Naive thymus-derived CD4-positive, alpha-beta T cell (primary cell): ENCODE measurements at regions of chr5 and their contacts with region 1.

Region 1: GRCh38 chr5:115841382-115842088 is at the starts of genes AP3S1 and ATG12:
- DNase-seq: peak; percentile 89 to 96 (median 94)
- ATAC-seq: peak; percentile 92
- H3K4me3 ChIP-seq: peak within 1 kb of the TSS; percentile 81
- H3K4me3 Mint-ChIP-seq: peak within 1 kb of the TSS; percentile 97 to 100 (median 99)
- H3K27ac ChIP-seq: peak within 1 kb of the TSS; percentile 83
- H3K27ac Mint-ChIP-seq: peak within 1 kb of the TSS; percentile 97 to 100 (median 99)
- H3K4me1 ChIP-seq: peaks cover 36 to 37% of the 10 kb centered on the region in 2 donors
- H3K4me1 Mint-ChIP-seq: peaks cover 34 to 83% (median 61%) of the 10 kb centered on the region in 7 donors
- H3K27me3 ChIP-seq: no peaks in the 10 kb centered on the region
- H3K27me3 Mint-ChIP-seq: peaks cover 0 to 7% (median 0%) of the 10 kb centered on the region in 5 donors
- total RNA-seq, gene AP3S1: 22.2 to 55.2 (median 43.3) TPM
- total RNA-seq, gene ATG12: 47.9 to 84.9 (median 60.0) TPM

Region 2: GRCh38 chr5:115169487-115170133 is 671.9 kb before region 1 on chr5 and contains the start of gene TRIM36:
- CTCF ChIA-PET with region 1: no interaction called
- POLR2A ChIA-PET with region 1: no interaction called
- intact Hi-C with region 1: loop called (anchors 1 to 5 kb)
- DNase-seq: peak; percentile 70 to 97 (median 81)
- ATAC-seq: peak; percentile 98
- H3K4me3 ChIP-seq: peak within 1 kb of the TSS; percentile 70
- H3K4me3 Mint-ChIP-seq: peak within 1 kb of the TSS; percentile 71 to 89 (median 84)
- H3K27ac ChIP-seq: no peak within 1 kb of the TSS
- H3K27ac Mint-ChIP-seq: peak within 1 kb of the TSS in 2 of 9 donors; percentile 53 to 81
- H3K4me1 ChIP-seq: peaks cover 9 to 11% of the 10 kb centered on the region in 2 donors
- H3K4me1 Mint-ChIP-seq: peaks cover 6 to 17% (median 12%) of the 10 kb centered on the region in 7 donors
- H3K27me3 ChIP-seq: peaks cover 17 to 38% of the 10 kb centered on the region in 2 donors
- H3K27me3 Mint-ChIP-seq: peaks cover 61 to 77% (median 68%) of the 10 kb centered on the region in 5 donors
- total RNA-seq, gene TRIM36: 0.12 to 2.6 (median 0.32) TPM in 4 of 5 experiments, not detected in the other

Region 3: GRCh38 chr5:115296124-115297022 is 545.2 kb before region 1 on chr5 and contains the start of gene CCDC112:
- CTCF ChIA-PET with region 1: no interaction called
- POLR2A ChIA-PET with region 1: interaction called, 5 read pairs
- intact Hi-C with region 1: loop called (anchors 1 kb)
- DNase-seq: peak; percentile 49 to 71 (median 67)
- ATAC-seq: peak; percentile 83
- H3K4me3 ChIP-seq: peak within 1 kb of the TSS; percentile 56
- H3K4me3 Mint-ChIP-seq: peak within 1 kb of the TSS; percentile 77 to 92 (median 89)
- H3K27ac ChIP-seq: peak within 1 kb of the TSS; percentile 47
- H3K27ac Mint-ChIP-seq: peak within 1 kb of the TSS in 8 of 9 donors; percentile 29 to 80 (median 69)
- H3K4me1 ChIP-seq: peaks cover 8 to 10% of the 10 kb centered on the region in 2 donors
- H3K4me1 Mint-ChIP-seq: peaks cover 5 to 18% (median 13%) of the 10 kb centered on the region in 7 donors
- H3K27me3 ChIP-seq: no peaks in the 10 kb centered on the region
- H3K27me3 Mint-ChIP-seq: peaks cover 0 to 69% (median 3%) of the 10 kb centered on the region in 5 donors
- total RNA-seq, gene CCDC112: 0.51 to 8.5 (median 3.9) TPM

Region 4: GRCh38 chr5:115586601-115587048 is 254.9 kb before region 1 on chr5:
- CTCF ChIA-PET with region 1: interaction called, 4 read pairs
- POLR2A ChIA-PET with region 1: interaction called, 3 read pairs
- intact Hi-C with region 1: loop called in 1 of 2 experiments (anchors 1 kb)
- DNase-seq: peak in 6 of 9 donors; percentile 13 to 38 (median 27)
- ATAC-seq: peak; percentile 56
- H3K4me3 ChIP-seq: no peak overlapping the region
- H3K4me3 Mint-ChIP-seq: no peak overlapping the region
- H3K27ac ChIP-seq: no peak overlapping the region
- H3K27ac Mint-ChIP-seq: no peak overlapping the region
- H3K4me1 ChIP-seq: no peaks in the 10 kb centered on the region
- H3K4me1 Mint-ChIP-seq: no peaks in the 10 kb centered on the region
- H3K27me3 ChIP-seq: no peaks in the 10 kb centered on the region
- H3K27me3 Mint-ChIP-seq: peaks cover 0 to 5% (median 0%) of the 10 kb centered on the region in 5 donors

Region 5: DNA sequence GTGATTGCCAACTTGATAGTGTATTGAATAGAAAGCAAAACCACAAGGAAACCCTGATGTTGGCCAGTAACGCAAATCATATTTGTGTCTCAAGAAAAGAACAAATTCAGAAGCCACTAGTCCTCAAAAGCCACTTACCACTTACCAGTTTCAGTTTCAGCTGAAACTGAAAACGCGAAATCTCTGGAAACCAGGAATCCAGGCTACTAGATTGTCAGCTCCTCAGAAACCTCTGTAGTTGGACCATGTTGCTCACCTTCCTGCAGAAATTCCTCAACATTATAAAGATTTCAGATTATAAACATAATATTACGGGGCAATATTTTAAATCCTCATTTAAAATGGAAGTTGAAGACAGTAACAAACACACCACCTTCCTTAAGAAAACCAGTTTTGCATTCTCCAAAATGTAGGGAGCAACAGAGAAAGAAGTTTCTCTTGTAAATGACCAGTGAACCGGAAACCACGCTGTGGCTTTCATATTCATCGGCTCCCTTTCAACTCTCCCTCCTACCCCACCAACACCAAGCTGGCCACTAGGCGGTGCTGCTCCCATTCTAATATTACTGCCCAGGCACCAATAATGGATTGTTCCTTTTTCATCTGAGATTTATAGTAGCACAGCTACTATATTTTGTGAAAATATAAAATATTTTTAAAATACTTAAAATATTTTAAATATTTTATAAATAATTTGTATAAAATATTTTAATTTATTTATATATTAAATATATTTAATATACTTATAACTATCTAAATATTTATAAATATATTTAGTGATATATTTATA is 207.0 kb before region 1 on chr5:
- CTCF ChIA-PET with region 1: interaction called, 5 read pairs
- POLR2A ChIA-PET with region 1: interaction called, 7 read pairs
- intact Hi-C with region 1: loop called (anchors 1 kb)
- DNase-seq: peak; percentile 59 to 75 (median 67)
- ATAC-seq: peak; percentile 97
- H3K4me3 ChIP-seq: peak overlapping the region; percentile 18
- H3K4me3 Mint-ChIP-seq: peak overlapping the region; percentile 59 to 87 (median 80)
- H3K27ac ChIP-seq: no peak overlapping the region
- H3K27ac Mint-ChIP-seq: peak overlapping the region in 6 of 9 donors; percentile 6 to 67 (median 43)
- H3K4me1 ChIP-seq: no peaks in the 10 kb centered on the region
- H3K4me1 Mint-ChIP-seq: peaks cover 0 to 44% (median 7%) of the 10 kb centered on the region in 7 donors
- H3K27me3 ChIP-seq: no peaks in the 10 kb centered on the region
- H3K27me3 Mint-ChIP-seq: peaks cover 0 to 66% (median 0%) of the 10 kb centered on the region in 5 donors

Region 6: DNA sequence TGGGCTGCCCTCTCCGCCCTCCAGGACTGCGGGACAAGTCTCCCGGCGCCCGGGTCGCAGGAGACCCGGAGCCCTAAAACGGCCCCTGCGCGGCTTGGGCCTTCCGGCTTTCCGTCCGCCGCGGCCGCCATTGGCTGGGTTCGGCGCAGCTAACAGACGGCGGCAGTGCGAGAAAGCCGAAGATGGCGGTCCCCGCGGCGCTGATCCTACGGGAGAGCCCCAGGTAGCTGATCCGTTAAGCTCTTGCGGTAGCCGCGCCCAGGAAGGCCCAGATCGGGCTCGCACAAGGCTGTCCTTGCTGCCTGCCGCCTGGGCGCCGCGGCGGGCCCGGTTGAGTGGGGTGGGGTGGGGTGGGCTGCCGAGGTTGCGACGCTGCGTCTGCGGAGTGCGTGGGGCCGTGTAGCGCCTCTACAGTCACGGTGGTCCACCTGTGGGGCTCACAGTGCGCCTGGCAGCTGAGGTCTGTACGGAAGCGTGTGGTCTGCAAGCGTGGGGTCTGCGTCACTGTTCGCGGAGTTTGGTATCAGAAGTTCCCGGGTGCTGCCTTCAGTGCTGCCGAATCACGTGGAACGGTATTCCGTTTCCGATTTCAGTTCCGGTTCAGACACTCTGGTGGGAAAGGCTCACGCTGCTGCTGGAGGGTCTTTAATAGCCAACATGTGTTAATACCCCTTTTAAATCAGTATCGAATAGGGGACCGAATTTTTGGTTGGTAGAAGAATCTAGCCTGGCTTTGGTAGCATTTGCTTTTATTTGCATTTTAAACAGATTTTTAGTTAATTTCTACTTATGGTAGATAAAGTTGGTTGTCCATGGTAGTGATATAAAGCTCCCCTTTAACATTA is 243.6 kb after region 1 on chr5 and contains the start of gene COMMD10:
- CTCF ChIA-PET with region 1: no interaction called
- POLR2A ChIA-PET with region 1: interaction called, 6 read pairs
- intact Hi-C with region 1: loop called (anchors 1 kb)
- DNase-seq: peak; percentile 65 to 88 (median 83)
- ATAC-seq: peak; percentile 95
- H3K4me3 ChIP-seq: peak within 1 kb of the TSS; percentile 54
- H3K4me3 Mint-ChIP-seq: peak within 1 kb of the TSS; percentile 87 to 98 (median 95)
- H3K27ac ChIP-seq: peak within 1 kb of the TSS; percentile 94
- H3K27ac Mint-ChIP-seq: peak within 1 kb of the TSS; percentile 90 to 99 (median 98)
- H3K4me1 ChIP-seq: peaks cover 13 to 16% of the 10 kb centered on the region in 2 donors
- H3K4me1 Mint-ChIP-seq: peaks cover 22 to 77% (median 66%) of the 10 kb centered on the region in 7 donors
- H3K27me3 ChIP-seq: no peaks in the 10 kb centered on the region
- H3K27me3 Mint-ChIP-seq: peaks cover 0 to 3% (median 0%) of the 10 kb centered on the region in 5 donors
- total RNA-seq, gene COMMD10: 29.4 to 50.6 (median 37.8) TPM